Colonic mucosa (tissue), 4 donors: ENCODE measurements at regions of chr11 and their contacts with region 1.

Region 1: GRCh38 chr11:45339729-45340519 is 53.8 kb upstream of the SYT13 start:
- DNase-seq: peak; percentile 96
- H3K4me3 ChIP-seq: no peak overlapping the region
- H3K27ac ChIP-seq: no peak overlapping the region
- H3K4me1 ChIP-seq: no peaks in the 10 kb centered on the region
- H3K27me3 ChIP-seq: no peaks in the 10 kb centered on the region
- CTCF ChIP-seq: peak; percentile 91

Region 2: GRCh38 chr11:45045683-45046471 is 294.0 kb before region 1 on chr11:
- intact Hi-C with region 1: no loop called
- DNase-seq: no peak
- H3K4me3 ChIP-seq: no peak overlapping the region
- H3K27ac ChIP-seq: no peak overlapping the region
- H3K4me1 ChIP-seq: no peaks in the 10 kb centered on the region
- H3K27me3 ChIP-seq: no peaks in the 10 kb centered on the region
- CTCF ChIP-seq: no peak

Region 3: GRCh38 chr11:45252134-45252855 is 87.6 kb before region 1 on chr11:
- intact Hi-C with region 1: loop called (anchors 10 kb)
- DNase-seq: peak; percentile 84
- H3K4me3 ChIP-seq: no peak overlapping the region
- H3K27ac ChIP-seq: no peak overlapping the region
- H3K4me1 ChIP-seq: no peaks in the 10 kb centered on the region
- H3K27me3 ChIP-seq: no peaks in the 10 kb centered on the region
- CTCF ChIP-seq: peak; percentile 81

Region 4: GRCh38 chr11:45765836-45766235 is 425.9 kb after region 1 on chr11:
- intact Hi-C with region 1: loop called (anchors 10 kb)
- DNase-seq: no peak
- H3K4me3 ChIP-seq: no peak overlapping the region
- H3K27ac ChIP-seq: no peak overlapping the region
- H3K4me1 ChIP-seq: no peaks in the 10 kb centered on the region
- H3K27me3 ChIP-seq: no peaks in the 10 kb centered on the region
- CTCF ChIP-seq: no peak